ENCODE measurements at regions of chr20 and their contacts with region 1.

Region 1: DNA sequence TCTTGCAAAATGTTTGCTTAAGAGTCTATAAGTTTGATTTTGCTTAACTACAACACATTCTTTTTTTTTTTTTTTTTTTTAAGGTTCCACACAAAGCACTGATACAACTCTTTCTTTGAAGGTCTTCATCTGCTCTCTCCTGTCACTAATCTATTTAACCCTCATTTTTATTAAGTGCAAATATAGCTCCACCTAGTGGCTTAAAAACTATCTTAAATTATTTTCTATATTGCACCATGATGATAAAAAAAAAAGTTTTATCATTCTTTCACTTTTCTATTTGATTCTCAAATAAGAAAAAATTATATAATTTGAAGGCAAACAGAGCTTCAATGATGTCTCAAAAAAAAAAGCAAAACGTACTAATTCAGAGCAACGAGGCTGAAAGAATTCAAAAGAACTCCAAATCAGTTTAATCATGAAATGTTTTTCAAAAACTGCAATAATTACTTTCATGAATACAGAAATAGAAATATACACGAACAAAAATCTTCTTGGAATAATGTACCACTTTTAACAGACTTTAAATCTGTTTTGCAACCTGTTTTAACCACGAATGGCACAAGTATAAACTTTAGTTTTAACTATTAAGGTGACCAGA is 12.8 kb downstream of the ESF1 start:
- DNase-seq: no peak
- H3K4me3 ChIP-seq: no peak overlapping the region
- H3K27ac ChIP-seq: no peak overlapping the region
- H3K4me1 ChIP-seq: no peaks in the 10 kb centered on the region
- H3K27me3 ChIP-seq: no peaks in the 10 kb centered on the region
- CTCF ChIP-seq: peak; percentile 55

Region 2: GRCh38 chr20:13644010-13644409 is 127.9 kb before region 1 on chr20:
- intact Hi-C with region 1: loop called (anchors 10 kb)
- DNase-seq: no peak
- H3K4me3 ChIP-seq: no peak overlapping the region
- H3K27ac ChIP-seq: no peak overlapping the region
- H3K4me1 ChIP-seq: no peaks in the 10 kb centered on the region
- H3K27me3 ChIP-seq: no peaks in the 10 kb centered on the region
- CTCF ChIP-seq: no peak

Measured in colonic mucosa (tissue), 4 donors.